ENCODE measurements at regions of chr17 and their contacts with region 1.

Region 1: DNA sequence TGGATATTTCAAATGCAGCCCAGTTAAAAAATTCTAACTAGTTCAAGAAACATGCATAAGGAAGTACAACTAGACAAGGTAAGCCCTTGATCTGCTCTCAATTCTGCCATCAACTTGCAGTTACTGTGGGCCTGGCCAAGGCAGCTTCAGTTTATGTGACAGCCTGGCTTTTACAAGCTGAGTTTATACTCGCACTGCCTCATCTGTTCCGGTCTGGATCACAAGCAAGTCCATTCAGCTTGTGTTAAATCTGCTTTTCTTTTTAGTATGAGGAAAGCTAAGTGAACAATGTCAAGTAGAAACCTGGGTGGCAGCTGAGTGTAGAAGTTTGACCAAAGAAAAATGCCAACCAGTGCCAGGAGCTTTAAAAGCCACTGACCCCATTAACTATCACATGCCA is 76.6 kb upstream of the CORO6 start:
- DNase-seq: peak; percentile 85 to 87
- H3K4me3 ChIP-seq: no peak overlapping the region
- H3K27ac ChIP-seq: peak overlapping the region; percentile 68 to 96 (median 93)
- H3K4me1 ChIP-seq: peaks cover 28 to 36% of the 10 kb centered on the region in 2 donors
- H3K27me3 ChIP-seq: no peaks in the 10 kb centered on the region
- CTCF ChIP-seq: no peak
- POLR2A ChIP-seq: peak in 1 of 2 donors; percentile 57

Region 2: GRCh38 chr17:29633886-29634285 is 65.4 kb before region 1 on chr17:
- intact Hi-C with region 1: loop called (anchors 10 kb)
- DNase-seq: no peak
- H3K4me3 ChIP-seq: no peak overlapping the region
- H3K27ac ChIP-seq: peak overlapping the region in 1 of 3 donors; percentile 85
- H3K4me1 ChIP-seq: peaks cover 35 to 50% of the 10 kb centered on the region in 2 donors
- H3K27me3 ChIP-seq: no peaks in the 10 kb centered on the region
- CTCF ChIP-seq: no peak
- POLR2A ChIP-seq: no peak

Measured in thyroid gland (tissue), 4 donors.